Naive thymus-derived CD4-positive, alpha-beta T cell (primary cell): ENCODE measurements at regions of chr16 and their contacts with region 1.

Region 1: GRCh38 chr16:77675464-77676324 is 46.6 kb upstream of the NUDT7 start:
- DNase-seq: peak; percentile 12 to 69 (median 54)
- ATAC-seq: peak; percentile 87
- H3K4me3 ChIP-seq: no peak overlapping the region
- H3K4me3 Mint-ChIP-seq: no peak overlapping the region
- H3K27ac ChIP-seq: no peak overlapping the region
- H3K27ac Mint-ChIP-seq: no peak overlapping the region
- H3K4me1 ChIP-seq: no peaks in the 10 kb centered on the region
- H3K4me1 Mint-ChIP-seq: no peaks in the 10 kb centered on the region
- H3K27me3 ChIP-seq: no peaks in the 10 kb centered on the region
- H3K27me3 Mint-ChIP-seq: peaks cover 0 to 10% (median 7%) of the 10 kb centered on the region in 5 donors

Region 2: GRCh38 chr16:77722309-77723107 is 46.8 kb after region 1 on chr16 and contains the start of gene NUDT7:
- CTCF ChIA-PET with region 1: interaction called, 3 read pairs
- POLR2A ChIA-PET with region 1: no interaction called
- intact Hi-C with region 1: loop called in 1 of 2 experiments (anchors 2 kb)
- DNase-seq: peak; percentile 78 to 98 (median 88)
- ATAC-seq: peak; percentile 98
- H3K4me3 ChIP-seq: peak within 1 kb of the TSS; percentile 76
- H3K4me3 Mint-ChIP-seq: peak within 1 kb of the TSS; percentile 86 to 94 (median 90)
- H3K27ac ChIP-seq: peak within 1 kb of the TSS; percentile 71
- H3K27ac Mint-ChIP-seq: peak within 1 kb of the TSS; percentile 51 to 91 (median 85)
- H3K4me1 ChIP-seq: peaks cover 5 to 9% of the 10 kb centered on the region in 2 donors
- H3K4me1 Mint-ChIP-seq: peaks cover 7 to 21% (median 15%) of the 10 kb centered on the region in 7 donors
- H3K27me3 ChIP-seq: no peaks in the 10 kb centered on the region
- H3K27me3 Mint-ChIP-seq: no peaks in the 10 kb centered on the region
- total RNA-seq, gene NUDT7: 2.1 to 10.9 (median 8.2) TPM

Region 3: DNA sequence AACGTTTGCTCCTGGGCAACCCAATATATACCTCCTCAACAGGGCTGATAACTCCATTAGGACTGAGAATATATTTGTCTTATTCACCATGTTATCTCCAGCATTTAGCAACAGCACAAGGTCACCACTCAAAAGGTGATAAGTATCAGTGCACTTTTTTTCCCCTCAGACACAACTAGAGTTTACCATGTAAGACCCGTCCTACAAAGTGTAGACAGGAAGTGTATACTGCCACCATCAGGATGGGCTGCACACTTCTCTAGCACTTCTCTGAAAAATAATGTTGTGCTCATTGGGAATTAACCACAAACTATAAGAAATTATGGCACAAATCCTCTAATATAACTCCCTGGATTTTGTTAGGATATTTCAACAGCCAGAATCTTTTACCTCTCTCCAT is 107.0 kb after region 1 on chr16:
- CTCF ChIA-PET with region 1: no interaction called
- POLR2A ChIA-PET with region 1: no interaction called
- intact Hi-C with region 1: loop called (anchors 5 kb)
- DNase-seq: no peak
- ATAC-seq: no peak
- H3K4me3 ChIP-seq: no peak overlapping the region
- H3K4me3 Mint-ChIP-seq: no peak overlapping the region
- H3K27ac ChIP-seq: no peak overlapping the region
- H3K27ac Mint-ChIP-seq: no peak overlapping the region
- H3K4me1 ChIP-seq: no peaks in the 10 kb centered on the region
- H3K4me1 Mint-ChIP-seq: no peaks in the 10 kb centered on the region
- H3K27me3 ChIP-seq: peaks cover 0 to 4% of the 10 kb centered on the region in 2 donors
- H3K27me3 Mint-ChIP-seq: peaks cover 20 to 41% (median 37%) of the 10 kb centered on the region in 5 donors

Region 4: GRCh38 chr16:77805398-77805797 is 129.7 kb after region 1 on chr16:
- CTCF ChIA-PET with region 1: no interaction called
- POLR2A ChIA-PET with region 1: no interaction called
- intact Hi-C with region 1: no loop called
- DNase-seq: no peak
- ATAC-seq: no peak
- H3K4me3 ChIP-seq: no peak overlapping the region
- H3K4me3 Mint-ChIP-seq: no peak overlapping the region
- H3K27ac ChIP-seq: no peak overlapping the region
- H3K27ac Mint-ChIP-seq: no peak overlapping the region
- H3K4me1 ChIP-seq: no peaks in the 10 kb centered on the region
- H3K4me1 Mint-ChIP-seq: no peaks in the 10 kb centered on the region
- H3K27me3 ChIP-seq: no peaks in the 10 kb centered on the region
- H3K27me3 Mint-ChIP-seq: peaks cover 0 to 26% (median 21%) of the 10 kb centered on the region in 5 donors

Region 5: DNA sequence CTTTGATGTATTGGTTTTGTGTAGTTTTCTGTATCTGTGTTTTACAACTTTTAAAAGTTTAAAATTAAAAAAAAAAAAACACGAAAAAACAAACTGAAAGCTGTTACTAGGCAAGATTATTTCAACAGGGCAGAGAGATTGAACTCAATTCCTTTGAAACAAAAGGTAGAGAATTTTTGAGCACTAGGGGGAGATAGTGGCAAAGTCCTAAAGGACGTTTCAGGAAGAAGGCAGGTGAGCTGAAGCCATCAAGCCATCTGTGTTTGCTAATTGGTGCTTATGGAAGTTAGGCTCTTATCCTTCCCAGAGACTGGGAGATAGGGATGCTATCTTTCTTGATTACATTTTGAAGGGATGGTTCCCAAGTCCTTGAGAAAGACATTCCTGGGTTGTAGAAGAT is 276.1 kb after region 1 on chr16:
- CTCF ChIA-PET with region 1: no interaction called
- POLR2A ChIA-PET with region 1: no interaction called
- intact Hi-C with region 1: loop called in 1 of 2 experiments (anchors 5 kb)
- DNase-seq: peak in 1 of 9 donors; percentile 4
- ATAC-seq: no peak
- H3K4me3 ChIP-seq: no peak overlapping the region
- H3K4me3 Mint-ChIP-seq: no peak overlapping the region
- H3K27ac ChIP-seq: no peak overlapping the region
- H3K27ac Mint-ChIP-seq: no peak overlapping the region
- H3K4me1 ChIP-seq: no peaks in the 10 kb centered on the region
- H3K4me1 Mint-ChIP-seq: no peaks in the 10 kb centered on the region
- H3K27me3 ChIP-seq: no peaks in the 10 kb centered on the region
- H3K27me3 Mint-ChIP-seq: peaks cover 4 to 32% (median 20%) of the 10 kb centered on the region in 5 donors

Region 6: GRCh38 chr16:77971306-77972271 is 295.9 kb after region 1 on chr16:
- CTCF ChIA-PET with region 1: interaction called, 6 read pairs
- POLR2A ChIA-PET with region 1: no interaction called
- intact Hi-C with region 1: loop called in 1 of 2 experiments (anchors 1 kb)
- DNase-seq: peak; percentile 21 to 73 (median 55)
- ATAC-seq: peak; percentile 55
- H3K4me3 ChIP-seq: no peak overlapping the region
- H3K4me3 Mint-ChIP-seq: no peak overlapping the region
- H3K27ac ChIP-seq: no peak overlapping the region
- H3K27ac Mint-ChIP-seq: no peak overlapping the region
- H3K4me1 ChIP-seq: no peaks in the 10 kb centered on the region
- H3K4me1 Mint-ChIP-seq: no peaks in the 10 kb centered on the region
- H3K27me3 ChIP-seq: no peaks in the 10 kb centered on the region
- H3K27me3 Mint-ChIP-seq: peaks cover 2 to 18% (median 12%) of the 10 kb centered on the region in 5 donors

Region 7: DNA sequence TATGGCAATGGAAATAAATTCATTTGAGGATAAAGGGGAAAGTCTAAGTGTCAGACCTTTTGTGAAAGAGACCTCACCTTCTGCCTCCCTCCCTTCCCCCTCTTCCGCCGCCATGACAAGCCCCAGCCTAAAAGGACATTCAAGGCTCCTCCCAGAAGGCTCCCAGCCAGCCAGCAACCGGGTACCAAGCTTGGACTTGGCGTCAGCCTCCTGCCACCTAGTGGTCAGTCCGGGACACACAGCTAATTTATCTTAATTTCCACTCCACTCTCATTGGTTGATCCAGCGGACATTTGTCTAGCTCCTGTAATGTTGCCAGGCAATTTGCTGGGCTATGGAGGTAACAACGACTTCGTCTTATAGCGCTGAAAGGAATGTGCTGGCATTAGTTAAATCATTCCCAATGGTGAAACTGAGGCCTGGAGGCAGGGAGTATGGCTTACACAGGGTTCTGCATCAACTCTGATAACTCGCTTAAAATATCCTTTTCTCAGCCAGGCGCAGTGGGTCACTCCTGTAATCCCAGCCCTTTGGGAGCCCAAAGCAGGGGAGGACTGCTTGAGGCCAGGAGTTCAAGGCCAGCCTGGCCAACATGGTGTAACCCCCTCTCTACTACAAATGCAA is 327.3 kb after region 1 on chr16:
- CTCF ChIA-PET with region 1: interaction called, 12 read pairs
- POLR2A ChIA-PET with region 1: no interaction called
- intact Hi-C with region 1: loop called (anchors 1 kb)
- DNase-seq: peak; percentile 15 to 69 (median 46)
- ATAC-seq: peak; percentile 86
- H3K4me3 ChIP-seq: no peak overlapping the region
- H3K4me3 Mint-ChIP-seq: no peak overlapping the region
- H3K27ac ChIP-seq: no peak overlapping the region
- H3K27ac Mint-ChIP-seq: peak overlapping the region in 1 of 9 donors; percentile 59
- H3K4me1 ChIP-seq: no peaks in the 10 kb centered on the region
- H3K4me1 Mint-ChIP-seq: peaks cover 0 to 6% (median 0%) of the 10 kb centered on the region in 7 donors
- H3K27me3 ChIP-seq: no peaks in the 10 kb centered on the region
- H3K27me3 Mint-ChIP-seq: peaks cover 0 to 18% (median 8%) of the 10 kb centered on the region in 5 donors

Region 8: GRCh38 chr16:78235168-78235800 is 559.6 kb after region 1 on chr16:
- CTCF ChIA-PET with region 1: no interaction called
- POLR2A ChIA-PET with region 1: no interaction called
- intact Hi-C with region 1: loop called in 1 of 2 experiments (anchors 2 kb)
- DNase-seq: peak; percentile 18 to 67 (median 49)
- ATAC-seq: peak; percentile 80
- H3K4me3 ChIP-seq: no peak overlapping the region
- H3K4me3 Mint-ChIP-seq: no peak overlapping the region
- H3K27ac ChIP-seq: no peak overlapping the region
- H3K27ac Mint-ChIP-seq: no peak overlapping the region
- H3K4me1 ChIP-seq: no peaks in the 10 kb centered on the region
- H3K4me1 Mint-ChIP-seq: peaks cover 0 to 6% (median 4%) of the 10 kb centered on the region in 7 donors
- H3K27me3 ChIP-seq: no peaks in the 10 kb centered on the region
- H3K27me3 Mint-ChIP-seq: no peaks in the 10 kb centered on the region